ENCODE measurements at regions of chr6 and their contacts with region 1.

Region 1: GRCh38 chr6:112043032-112044007 is 10.6 kb upstream of the CCN6 start:
- DNase-seq: peak; percentile 87 to 96 (median 93)
- ATAC-seq: peak; percentile 93
- H3K4me3 ChIP-seq: peak overlapping the region; percentile 56 to 65
- H3K4me3 Mint-ChIP-seq: peak overlapping the region; percentile 97
- H3K27ac ChIP-seq: peak overlapping the region; percentile 83 to 88
- H3K27ac Mint-ChIP-seq: peak overlapping the region; percentile 99
- H3K4me1 ChIP-seq: peaks cover 6% of the 10 kb centered on the region
- H3K4me1 Mint-ChIP-seq: peaks cover 21% of the 10 kb centered on the region
- H3K27me3 ChIP-seq: no peaks in the 10 kb centered on the region
- H3K27me3 Mint-ChIP-seq: no peaks in the 10 kb centered on the region
- CTCF ChIP-seq: peak; percentile 82

Region 2: DNA sequence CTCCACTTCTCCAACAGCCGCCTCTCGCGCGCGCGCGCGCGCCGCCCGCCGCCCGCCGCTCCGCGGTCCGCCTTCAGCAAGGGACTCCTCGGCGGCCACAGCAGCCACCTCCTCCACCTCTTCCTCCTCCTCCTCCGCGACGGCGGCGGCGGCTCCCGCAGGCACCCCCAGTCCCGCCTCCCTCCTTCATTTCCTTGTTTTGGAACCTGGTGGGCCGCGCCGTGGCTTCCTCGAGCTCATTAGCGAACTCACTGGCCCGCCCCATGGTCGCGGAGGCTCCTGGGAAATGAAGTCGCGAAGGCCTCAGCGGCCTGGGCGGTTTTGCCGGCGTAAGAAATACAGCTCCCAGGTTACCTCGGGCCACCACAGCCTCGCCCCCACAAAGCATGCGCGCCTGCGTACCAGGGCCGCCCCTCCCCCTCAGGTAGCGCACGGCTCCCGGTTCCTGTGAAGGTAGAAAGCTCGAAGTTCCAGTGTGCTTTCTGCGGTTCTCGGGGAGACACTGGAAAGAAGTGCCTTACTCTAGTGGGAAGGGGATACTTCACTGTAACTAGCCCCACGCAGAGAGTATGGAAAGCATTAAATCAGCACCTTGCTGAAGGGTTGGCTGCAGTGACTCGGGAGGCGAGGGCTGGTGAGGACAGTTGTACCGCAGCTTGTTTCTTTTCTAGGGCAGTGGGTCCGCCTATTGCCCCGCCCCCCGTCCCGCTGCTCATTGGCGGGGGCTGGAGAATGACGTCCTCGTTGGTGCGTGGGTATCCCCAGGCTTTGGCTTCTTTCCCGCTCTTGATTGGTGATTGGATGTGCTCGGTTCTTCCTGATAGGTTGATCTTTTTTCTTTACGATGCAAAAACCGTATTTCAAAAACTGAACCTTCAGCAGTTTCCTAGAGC is 1227.9 kb before region 1 on chr6 and contains the start of gene CDK19:
- CTCF ChIA-PET with region 1: no interaction called
- POLR2A ChIA-PET with region 1: no interaction called
- intact Hi-C with region 1: loop called in 1 of 2 experiments (anchors 1 kb)
- DNase-seq: peak; percentile 96 to 99 (median 98)
- ATAC-seq: peak; percentile 81
- H3K4me3 ChIP-seq: peak within 1 kb of the TSS; percentile 83 to 89
- H3K4me3 Mint-ChIP-seq: peak within 1 kb of the TSS; percentile 98
- H3K27ac ChIP-seq: peak within 1 kb of the TSS; percentile 88 to 95
- H3K27ac Mint-ChIP-seq: peak within 1 kb of the TSS; percentile 99
- H3K4me1 ChIP-seq: peaks cover 12% of the 10 kb centered on the region
- H3K4me1 Mint-ChIP-seq: peaks cover 23% of the 10 kb centered on the region
- H3K27me3 ChIP-seq: no peaks in the 10 kb centered on the region
- H3K27me3 Mint-ChIP-seq: no peaks in the 10 kb centered on the region
- CTCF ChIP-seq: no peak
- total RNA-seq, gene CDK19: 4.9 to 5.0 TPM

Region 3: DNA sequence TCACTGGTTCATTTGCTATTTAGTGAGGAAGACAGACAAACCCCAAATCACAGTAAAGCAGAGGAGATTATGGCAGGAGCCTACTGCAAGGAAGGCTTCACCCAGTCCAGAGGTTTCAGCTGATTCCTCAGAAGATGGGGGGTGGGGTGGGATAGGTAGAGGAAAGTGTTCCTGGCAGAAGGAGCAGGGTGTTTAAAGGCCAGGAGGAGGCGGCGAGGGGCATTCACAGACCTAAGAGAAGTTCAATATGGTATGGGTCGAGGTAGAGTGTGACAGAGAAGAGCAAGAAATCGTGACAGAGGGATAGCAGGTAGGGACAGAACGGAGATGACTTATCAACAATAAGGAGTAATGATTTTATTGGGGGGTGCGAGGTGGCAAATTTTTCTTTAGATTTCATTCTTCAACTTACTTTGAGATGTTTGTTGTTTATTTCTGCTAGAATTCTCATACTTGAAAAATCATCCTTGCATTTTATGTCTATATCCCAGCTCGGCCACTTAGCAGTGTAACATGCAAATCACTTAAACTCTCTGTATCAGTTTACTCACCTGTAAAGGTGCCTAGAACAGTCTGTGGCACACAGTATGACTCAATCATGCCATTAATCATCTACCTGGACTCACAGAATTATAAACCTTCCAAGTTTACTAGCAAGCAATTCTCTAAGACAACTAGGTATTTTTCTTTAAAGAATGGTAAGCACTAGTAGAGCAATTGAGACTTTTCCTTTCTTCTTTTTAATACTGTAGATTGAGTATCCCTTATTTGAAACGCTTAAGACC is 737.0 kb before region 1 on chr6:
- CTCF ChIA-PET with region 1: no interaction called
- POLR2A ChIA-PET with region 1: no interaction called
- intact Hi-C with region 1: no loop called
- DNase-seq: no peak
- ATAC-seq: no peak
- H3K4me3 ChIP-seq: no peak overlapping the region
- H3K4me3 Mint-ChIP-seq: no peak overlapping the region
- H3K27ac ChIP-seq: no peak overlapping the region
- H3K27ac Mint-ChIP-seq: no peak overlapping the region
- H3K4me1 ChIP-seq: no peaks in the 10 kb centered on the region
- H3K4me1 Mint-ChIP-seq: peaks cover 4% of the 10 kb centered on the region
- H3K27me3 ChIP-seq: no peaks in the 10 kb centered on the region
- H3K27me3 Mint-ChIP-seq: no peaks in the 10 kb centered on the region
- CTCF ChIP-seq: no peak

Region 4: DNA sequence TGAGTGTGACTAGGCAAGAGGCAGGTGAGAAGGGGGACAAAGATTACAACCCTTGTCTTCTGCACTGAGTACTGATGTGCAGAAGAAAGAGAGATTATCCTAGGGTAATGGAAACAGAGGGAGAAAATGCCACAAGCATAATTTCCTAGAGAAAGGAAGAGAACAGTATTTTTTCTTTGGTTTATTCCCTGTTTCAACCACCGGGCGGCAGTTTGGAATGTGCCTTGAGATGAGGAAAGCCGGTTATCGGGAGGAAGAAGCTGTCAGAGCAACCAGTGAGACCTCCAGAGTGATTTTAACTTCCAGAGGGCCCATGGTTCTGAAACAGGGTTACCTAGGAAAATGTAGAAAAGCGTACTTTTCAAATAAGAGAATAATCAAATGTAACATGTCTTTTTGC is 681.7 kb before region 1 on chr6:
- CTCF ChIA-PET with region 1: no interaction called
- POLR2A ChIA-PET with region 1: no interaction called
- intact Hi-C with region 1: loop called in 1 of 2 experiments (anchors 10 kb)
- DNase-seq: peak in 2 of 9 experiments; percentile 6 to 30
- ATAC-seq: no peak
- H3K4me3 ChIP-seq: no peak overlapping the region
- H3K4me3 Mint-ChIP-seq: no peak overlapping the region
- H3K27ac ChIP-seq: no peak overlapping the region
- H3K27ac Mint-ChIP-seq: no peak overlapping the region
- H3K4me1 ChIP-seq: no peaks in the 10 kb centered on the region
- H3K4me1 Mint-ChIP-seq: no peaks in the 10 kb centered on the region
- H3K27me3 ChIP-seq: no peaks in the 10 kb centered on the region
- H3K27me3 Mint-ChIP-seq: no peaks in the 10 kb centered on the region
- CTCF ChIP-seq: no peak

Region 5: GRCh38 chr6:111750753-111751684 is 292.3 kb before region 1 on chr6:
- CTCF ChIA-PET with region 1: interaction called, 12 read pairs
- POLR2A ChIA-PET with region 1: no interaction called
- intact Hi-C with region 1: no loop called
- DNase-seq: peak in 8 of 9 experiments; percentile 42 to 93 (median 67)
- ATAC-seq: peak; percentile 76
- H3K4me3 ChIP-seq: peak overlapping the region in 1 of 2 experiments; percentile 9
- H3K4me3 Mint-ChIP-seq: peak overlapping the region; percentile 53
- H3K27ac ChIP-seq: peak overlapping the region; percentile 73 to 99
- H3K27ac Mint-ChIP-seq: peak overlapping the region; percentile 97
- H3K4me1 ChIP-seq: peaks cover 97% of the 10 kb centered on the region
- H3K4me1 Mint-ChIP-seq: peaks cover 95% of the 10 kb centered on the region
- H3K27me3 ChIP-seq: no peaks in the 10 kb centered on the region
- H3K27me3 Mint-ChIP-seq: no peaks in the 10 kb centered on the region
- CTCF ChIP-seq: no peak

Region 6: DNA sequence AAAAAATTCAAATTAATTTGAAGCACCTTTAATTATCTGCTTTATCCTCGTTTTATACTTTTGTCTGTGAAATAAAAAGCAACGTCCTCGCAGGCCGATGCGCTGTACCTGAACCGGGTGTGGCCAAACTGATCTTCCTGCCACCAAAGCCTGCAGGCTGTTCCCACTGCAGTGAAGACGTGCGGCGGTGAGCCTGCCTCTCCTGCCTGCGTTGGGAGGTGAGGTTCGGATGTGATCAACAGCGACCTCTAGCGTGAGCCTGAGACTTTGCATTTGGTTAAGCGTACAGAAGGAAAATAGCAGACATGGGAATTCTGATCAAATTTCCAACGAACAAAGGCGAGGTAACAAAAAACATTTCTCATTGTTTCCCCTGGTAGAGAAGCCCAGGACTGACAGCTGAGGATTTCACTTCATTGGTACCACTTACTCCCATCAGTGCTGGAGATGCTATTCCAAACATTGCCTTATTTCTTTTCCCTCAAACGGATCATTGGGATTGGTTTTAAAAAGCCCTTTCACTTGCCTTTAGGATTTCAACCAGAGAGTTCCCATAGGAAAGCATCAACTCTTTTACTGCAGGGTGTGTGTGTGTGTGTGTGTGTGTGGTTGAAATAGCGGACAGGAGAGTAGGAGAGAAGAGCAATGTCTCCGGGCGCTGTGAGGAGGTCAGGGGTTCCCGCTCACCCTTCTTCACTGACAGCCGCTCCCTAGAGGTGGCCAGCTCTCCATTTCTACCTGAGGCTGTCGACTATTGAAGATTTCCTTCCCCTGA is 46.1 kb before region 1 on chr6:
- CTCF ChIA-PET with region 1: interaction called, 18 read pairs
- POLR2A ChIA-PET with region 1: interaction called, 10 read pairs
- intact Hi-C with region 1: loop called (anchors 1 kb)
- DNase-seq: peak; percentile 59 to 91 (median 82)
- ATAC-seq: peak; percentile 71
- H3K4me3 ChIP-seq: peak overlapping the region in 1 of 2 experiments; percentile 13
- H3K4me3 Mint-ChIP-seq: peak overlapping the region; percentile 71
- H3K27ac ChIP-seq: no peak overlapping the region
- H3K27ac Mint-ChIP-seq: peak overlapping the region; percentile 89
- H3K4me1 ChIP-seq: peaks cover 37% of the 10 kb centered on the region
- H3K4me1 Mint-ChIP-seq: peaks cover 45% of the 10 kb centered on the region
- H3K27me3 ChIP-seq: no peaks in the 10 kb centered on the region
- H3K27me3 Mint-ChIP-seq: no peaks in the 10 kb centered on the region
- CTCF ChIP-seq: peak; percentile 98

Region 7: GRCh38 chr6:112029045-112029822 is 14.1 kb before region 1 on chr6:
- CTCF ChIA-PET with region 1: interaction called, 95 read pairs
- POLR2A ChIA-PET with region 1: interaction called, 61 read pairs
- intact Hi-C with region 1: loop called in 1 of 2 experiments (anchors 1 kb)
- DNase-seq: peak; percentile 35 to 81 (median 64)
- ATAC-seq: no peak
- H3K4me3 ChIP-seq: no peak overlapping the region
- H3K4me3 Mint-ChIP-seq: peak overlapping the region; percentile 61
- H3K27ac ChIP-seq: peak overlapping the region; percentile 46 to 85
- H3K27ac Mint-ChIP-seq: peak overlapping the region; percentile 95
- H3K4me1 ChIP-seq: peaks cover 66% of the 10 kb centered on the region
- H3K4me1 Mint-ChIP-seq: peaks cover 76% of the 10 kb centered on the region
- H3K27me3 ChIP-seq: no peaks in the 10 kb centered on the region
- H3K27me3 Mint-ChIP-seq: no peaks in the 10 kb centered on the region
- CTCF ChIP-seq: peak; percentile 58